Activated B cell treated with CpG ODN at 0.5 μM for 24 hours (primary cell): ENCODE measurements at regions of chr6 and their contacts with region 1.

Region 1: GRCh38 chr6:143427109-143427817 is 23.2 kb downstream of the ADAT2 start:
- DNase-seq: peak; percentile 44
- ATAC-seq: peak; percentile 100
- H3K4me3 Mint-ChIP-seq: no peak overlapping the region
- H3K27ac Mint-ChIP-seq: no peak overlapping the region
- H3K4me1 Mint-ChIP-seq: no peaks in the 10 kb centered on the region
- H3K27me3 Mint-ChIP-seq: no peaks in the 10 kb centered on the region
- CTCF ChIP-seq: peak; percentile 58

Region 2: GRCh38 chr6:142474531-142475289 is 952.6 kb before region 1 on chr6:
- CTCF ChIA-PET with region 1: interaction called, 46 read pairs
- POLR2A ChIA-PET with region 1: no interaction called
- intact Hi-C with region 1: loop called (anchors 1 kb)
- DNase-seq: no peak
- ATAC-seq: peak; percentile 54
- H3K4me3 Mint-ChIP-seq: no peak overlapping the region
- H3K27ac Mint-ChIP-seq: no peak overlapping the region
- H3K4me1 Mint-ChIP-seq: no peaks in the 10 kb centered on the region
- H3K27me3 Mint-ChIP-seq: peaks cover 3% of the 10 kb centered on the region
- CTCF ChIP-seq: peak; percentile 81

Region 3: DNA sequence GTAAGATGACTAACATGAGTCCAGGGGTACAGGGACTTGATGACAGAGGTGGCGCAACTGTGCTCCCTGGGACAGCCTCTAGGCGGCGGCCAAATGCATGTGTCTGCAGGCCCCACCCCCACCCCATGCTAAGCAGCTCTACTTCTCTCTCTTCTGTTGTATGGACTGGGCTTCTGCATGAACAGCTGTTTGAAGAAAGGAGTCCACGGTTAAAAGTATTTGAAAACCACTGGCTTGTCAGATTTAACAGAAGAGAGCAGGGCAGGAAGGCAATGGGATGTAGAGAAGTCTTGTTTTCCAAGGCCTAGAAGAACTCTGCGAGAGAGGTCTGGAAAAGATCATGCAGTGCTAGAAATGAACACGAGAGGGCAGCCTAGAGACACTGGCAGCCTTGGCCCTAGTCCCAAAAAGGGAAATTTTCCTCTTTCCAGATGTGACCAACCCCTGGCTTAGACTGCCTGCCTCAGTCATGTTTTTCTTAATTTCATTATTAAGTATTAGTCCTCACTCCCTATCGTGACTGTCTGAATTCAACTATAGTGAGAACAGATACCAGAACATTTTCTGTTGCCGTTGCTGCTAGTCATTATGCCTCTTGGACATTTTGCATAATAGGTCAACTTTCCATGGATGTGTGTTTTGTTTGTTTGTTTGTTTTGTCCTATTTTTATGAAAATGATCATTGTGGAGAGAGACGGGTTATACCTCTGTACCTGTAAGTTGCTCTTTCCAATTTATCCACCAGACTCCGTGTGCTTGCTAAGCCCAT is 860.5 kb before region 1 on chr6:
- CTCF ChIA-PET with region 1: interaction called, 34 read pairs
- POLR2A ChIA-PET with region 1: no interaction called
- intact Hi-C with region 1: loop called (anchors 1 kb)
- DNase-seq: no peak
- ATAC-seq: peak; percentile 66
- H3K4me3 Mint-ChIP-seq: no peak overlapping the region
- H3K27ac Mint-ChIP-seq: no peak overlapping the region
- H3K4me1 Mint-ChIP-seq: no peaks in the 10 kb centered on the region
- H3K27me3 Mint-ChIP-seq: no peaks in the 10 kb centered on the region
- CTCF ChIP-seq: peak; percentile 79

Region 4: DNA sequence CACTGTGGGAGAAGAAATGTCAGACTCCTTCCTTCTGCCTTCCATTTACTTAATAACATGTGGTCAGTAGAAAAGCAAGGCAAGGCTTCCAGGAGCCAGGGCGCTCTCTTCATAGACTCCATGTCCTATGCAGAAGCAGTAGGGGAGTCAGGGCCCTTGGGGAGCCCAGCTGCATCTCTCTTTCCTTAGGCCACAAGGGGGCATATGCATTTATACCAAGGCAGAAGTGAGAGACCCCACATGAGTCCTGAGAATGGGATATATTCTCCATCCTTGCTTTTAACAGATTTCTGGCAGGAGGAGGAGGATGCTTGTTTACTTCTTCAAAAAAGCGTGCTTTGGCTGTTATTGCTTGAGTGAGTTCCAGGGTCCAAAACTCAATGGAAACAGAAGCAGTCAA is 680.7 kb before region 1 on chr6:
- CTCF ChIA-PET with region 1: interaction called, 6 read pairs
- POLR2A ChIA-PET with region 1: no interaction called
- intact Hi-C with region 1: loop called (anchors 2 kb)
- DNase-seq: no peak
- ATAC-seq: peak; percentile 58
- H3K4me3 Mint-ChIP-seq: no peak overlapping the region
- H3K27ac Mint-ChIP-seq: no peak overlapping the region
- H3K4me1 Mint-ChIP-seq: peaks cover 11% of the 10 kb centered on the region
- H3K27me3 Mint-ChIP-seq: peaks cover 3% of the 10 kb centered on the region
- CTCF ChIP-seq: no peak

Region 5: DNA sequence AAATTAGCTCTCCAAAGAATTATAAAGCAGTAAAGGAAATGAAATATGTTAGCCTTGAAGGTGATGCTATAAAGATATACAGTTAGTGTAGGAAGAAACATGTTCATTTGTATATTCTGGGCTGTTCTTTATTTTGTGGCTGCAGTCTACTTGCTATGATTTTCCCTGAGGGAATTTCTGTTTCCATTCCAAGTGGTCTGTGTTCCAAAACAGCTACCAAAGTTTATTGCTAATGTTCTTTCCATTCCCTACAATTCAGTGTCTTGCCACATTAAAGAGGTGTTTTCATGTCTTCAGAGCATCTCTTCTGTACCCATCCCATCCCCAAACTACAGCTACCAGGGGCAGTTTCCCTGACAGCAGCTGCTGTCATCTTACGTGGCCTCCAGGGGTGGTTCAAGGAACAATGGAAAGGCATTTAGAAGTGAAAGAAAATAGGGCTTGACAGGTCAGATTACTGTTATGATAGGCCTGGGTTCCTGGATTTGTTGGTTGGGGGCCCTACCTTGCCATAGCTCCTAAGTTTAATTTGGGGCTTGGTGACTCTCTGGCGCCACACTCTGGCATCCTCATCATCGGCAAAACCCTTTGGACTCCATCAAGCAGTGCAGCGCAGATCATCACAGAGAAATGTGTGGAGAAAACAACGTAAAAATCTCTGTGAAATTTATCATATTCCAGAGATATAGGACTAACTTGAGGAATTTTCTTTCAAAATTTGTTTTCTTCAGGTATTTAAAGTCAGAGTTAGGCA is 400.4 kb before region 1 on chr6:
- CTCF ChIA-PET with region 1: interaction called, 5 read pairs
- POLR2A ChIA-PET with region 1: no interaction called
- intact Hi-C with region 1: loop called (anchors 1 kb)
- DNase-seq: peak; percentile 26
- ATAC-seq: peak; percentile 68
- H3K4me3 Mint-ChIP-seq: no peak overlapping the region
- H3K27ac Mint-ChIP-seq: no peak overlapping the region
- H3K4me1 Mint-ChIP-seq: peaks cover 5% of the 10 kb centered on the region
- H3K27me3 Mint-ChIP-seq: no peaks in the 10 kb centered on the region
- CTCF ChIP-seq: no peak

Region 6: DNA sequence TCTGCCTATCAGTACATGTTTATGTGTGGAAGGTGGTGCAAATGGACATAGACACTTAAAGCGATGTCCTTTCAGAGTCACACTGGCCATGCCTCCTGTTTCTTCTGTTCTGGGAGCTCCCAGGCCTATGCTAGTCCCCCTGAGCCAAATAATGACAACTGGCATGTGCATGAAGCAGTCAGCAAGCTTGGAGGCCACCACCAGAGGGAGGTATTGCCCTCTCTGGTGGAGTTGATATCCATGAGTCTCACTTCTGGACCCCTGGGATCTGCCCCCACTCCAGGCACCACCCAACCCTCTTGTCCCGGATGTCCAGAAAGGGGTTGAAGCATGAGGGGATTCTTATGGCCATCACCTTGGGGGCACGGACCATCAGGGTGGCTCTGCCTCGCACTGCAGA is 194.4 kb before region 1 on chr6:
- CTCF ChIA-PET with region 1: interaction called, 3 read pairs
- POLR2A ChIA-PET with region 1: no interaction called
- intact Hi-C with region 1: loop called (anchors 10 kb)
- DNase-seq: no peak
- ATAC-seq: no peak
- H3K4me3 Mint-ChIP-seq: no peak overlapping the region
- H3K27ac Mint-ChIP-seq: no peak overlapping the region
- H3K4me1 Mint-ChIP-seq: no peaks in the 10 kb centered on the region
- H3K27me3 Mint-ChIP-seq: no peaks in the 10 kb centered on the region
- CTCF ChIP-seq: no peak

Region 7: GRCh38 chr6:143337201-143337949 is 89.9 kb before region 1 on chr6:
- CTCF ChIA-PET with region 1: interaction called, 4 read pairs
- POLR2A ChIA-PET with region 1: no interaction called
- intact Hi-C with region 1: loop called (anchors 2 kb)
- DNase-seq: peak; percentile 32
- ATAC-seq: no peak
- H3K4me3 Mint-ChIP-seq: no peak overlapping the region
- H3K27ac Mint-ChIP-seq: no peak overlapping the region
- H3K4me1 Mint-ChIP-seq: no peaks in the 10 kb centered on the region
- H3K27me3 Mint-ChIP-seq: no peaks in the 10 kb centered on the region
- CTCF ChIP-seq: no peak

Region 8: GRCh38 chr6:143457563-143458359 is 30.5 kb after region 1 on chr6:
- CTCF ChIA-PET with region 1: no interaction called
- POLR2A ChIA-PET with region 1: no interaction called
- intact Hi-C with region 1: no loop called
- DNase-seq: no peak
- ATAC-seq: no peak
- H3K4me3 Mint-ChIP-seq: no peak overlapping the region
- H3K27ac Mint-ChIP-seq: no peak overlapping the region
- H3K4me1 Mint-ChIP-seq: peaks cover 13% of the 10 kb centered on the region
- H3K27me3 Mint-ChIP-seq: no peaks in the 10 kb centered on the region
- CTCF ChIP-seq: no peak